T-cell (primary cell): ENCODE measurements at regions of chr6 and their contacts with region 1.

Region 1: DNA sequence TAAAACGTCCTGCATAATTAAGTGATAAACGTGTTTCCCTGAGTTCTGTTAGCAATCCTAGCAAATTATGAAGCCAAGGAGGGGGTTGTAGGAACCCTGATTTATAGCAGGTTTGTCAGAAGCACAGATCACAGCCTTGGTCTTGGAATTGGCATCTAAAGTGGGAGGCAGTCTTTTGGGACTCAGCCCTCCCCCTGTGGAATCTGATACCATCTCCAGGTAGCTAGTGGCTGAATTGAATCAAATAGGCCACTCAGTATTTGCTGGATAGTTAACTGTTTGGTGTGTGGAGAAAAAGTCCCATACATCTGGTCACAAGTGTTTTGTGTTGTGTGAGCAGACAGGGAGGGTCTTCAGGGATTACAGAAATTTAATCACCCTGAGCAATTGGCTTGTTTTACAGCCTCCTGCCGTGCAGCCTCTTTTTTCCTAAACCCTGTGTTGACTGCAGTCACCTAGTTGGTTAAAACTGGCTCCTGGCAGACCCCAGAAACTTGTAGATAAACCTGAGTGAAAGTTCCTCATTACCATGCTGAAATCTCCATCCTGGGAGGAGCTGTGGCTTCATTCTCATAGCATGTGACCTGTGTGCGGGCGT is 19.0 kb upstream of the KIFC1 start:
- DNase-seq: no peak
- ATAC-seq: no peak
- H3K4me3 ChIP-seq: no peak overlapping the region
- H3K4me3 Mint-ChIP-seq: no peak overlapping the region
- H3K27ac ChIP-seq: no peak overlapping the region
- H3K27ac Mint-ChIP-seq: no peak overlapping the region
- H3K4me1 ChIP-seq: peaks cover 0 to 26% of the 10 kb centered on the region in 2 experiments
- H3K4me1 Mint-ChIP-seq: peaks cover 8 to 17% (median 14%) of the 10 kb centered on the region in 3 donors
- H3K27me3 ChIP-seq: no peaks in the 10 kb centered on the region
- H3K27me3 Mint-ChIP-seq: no peaks in the 10 kb centered on the region

Region 2: DNA sequence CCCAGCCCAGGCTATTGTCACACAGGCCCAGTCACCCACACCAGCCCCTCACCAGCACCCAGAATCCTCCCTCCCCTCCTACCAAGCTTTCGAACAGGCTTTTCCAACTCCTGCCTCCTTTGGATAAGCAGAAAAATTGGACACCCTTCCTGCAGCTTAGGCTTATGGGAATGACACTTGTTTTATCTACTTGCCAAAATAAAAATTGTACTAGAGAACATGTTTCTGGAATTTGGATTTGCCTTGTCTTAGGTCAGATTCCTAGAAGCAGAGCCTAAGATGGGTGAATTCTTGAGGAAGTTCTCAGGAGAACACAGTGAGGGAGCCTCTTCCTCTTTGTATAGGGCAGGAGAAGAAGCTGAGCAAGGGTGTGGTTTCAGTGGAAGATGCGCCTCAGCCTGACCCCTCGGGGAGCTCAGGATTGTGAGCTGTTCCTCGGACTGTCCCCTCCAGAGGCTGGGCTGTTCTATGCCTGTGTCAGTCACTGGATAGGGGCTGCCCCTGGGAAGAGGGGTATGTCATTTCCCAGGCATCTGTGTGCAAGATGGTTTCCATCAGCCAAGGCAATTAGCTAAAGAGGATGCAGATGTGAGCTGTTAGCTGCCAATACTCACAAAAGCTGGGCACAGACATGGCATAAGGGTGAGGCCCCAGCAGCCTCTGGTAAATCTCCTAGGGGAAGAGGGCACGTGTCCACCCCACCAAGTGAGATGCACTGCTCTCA is 282.4 kb after region 1 on chr6:
- CTCF ChIA-PET with region 1: no interaction called
- POLR2A ChIA-PET with region 1: interaction called in 1 of 2 experiments, 11 read pairs
- DNase-seq: no peak
- ATAC-seq: no peak
- H3K4me3 ChIP-seq: no peak overlapping the region
- H3K4me3 Mint-ChIP-seq: no peak overlapping the region
- H3K27ac ChIP-seq: no peak overlapping the region
- H3K27ac Mint-ChIP-seq: no peak overlapping the region
- H3K4me1 ChIP-seq: no peaks in the 10 kb centered on the region
- H3K4me1 Mint-ChIP-seq: peaks cover 3 to 5% (median 4%) of the 10 kb centered on the region in 3 donors
- H3K27me3 ChIP-seq: no peaks in the 10 kb centered on the region
- H3K27me3 Mint-ChIP-seq: no peaks in the 10 kb centered on the region